Heart left ventricle (tissue), 16 donors: ENCODE measurements at regions of chr7 and their contacts with region 1.

Region 1: DNA sequence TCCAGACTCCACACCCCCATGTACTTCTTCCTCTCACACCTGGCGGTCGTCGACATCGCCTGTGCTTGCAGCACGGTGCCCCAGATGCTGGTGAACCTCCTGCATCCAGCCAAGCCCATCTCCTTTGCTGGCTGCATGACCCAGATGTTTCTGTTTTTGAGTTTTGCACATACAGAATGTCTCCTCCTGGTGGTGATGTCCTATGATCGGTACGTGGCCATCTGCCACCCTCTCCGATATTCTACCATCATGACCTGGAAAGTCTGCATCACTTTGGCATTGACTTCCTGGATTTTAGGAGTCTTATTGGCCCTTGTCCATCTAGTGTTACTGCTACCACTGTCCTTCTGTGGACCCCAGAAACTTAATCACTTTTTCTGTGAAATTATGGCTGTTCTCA is 4.8 kb downstream of the OR2A25 start:
- DNase-seq: no peak
- ATAC-seq: no peak
- H3K4me3 ChIP-seq: no peak overlapping the region
- H3K27ac ChIP-seq: no peak overlapping the region
- H3K4me1 ChIP-seq: no peaks in the 10 kb centered on the region
- H3K27me3 ChIP-seq: no peaks in the 10 kb centered on the region
- CTCF ChIP-seq: no peak
- POLR2A ChIP-seq: no peak

Region 2: GRCh38 chr7:143929224-143929920 is 145.0 kb before region 1 on chr7:
- intact Hi-C with region 1: no loop called
- DNase-seq: no peak
- ATAC-seq: peak in 2 of 4 donors; percentile 76 to 77
- H3K4me3 ChIP-seq: no peak overlapping the region
- H3K27ac ChIP-seq: no peak overlapping the region
- H3K4me1 ChIP-seq: no peaks in the 10 kb centered on the region
- H3K27me3 ChIP-seq: no peaks in the 10 kb centered on the region
- CTCF ChIP-seq: no peak
- POLR2A ChIP-seq: no peak

Region 3: GRCh38 chr7:144057972-144058371 is 16.4 kb before region 1 on chr7:
- intact Hi-C with region 1: loop called in 1 of 10 experiments (anchors 1 kb)
- DNase-seq: no peak
- ATAC-seq: no peak
- H3K4me3 ChIP-seq: no peak overlapping the region
- H3K27ac ChIP-seq: no peak overlapping the region
- H3K4me1 ChIP-seq: no peaks in the 10 kb centered on the region
- H3K27me3 ChIP-seq: no peaks in the 10 kb centered on the region
- CTCF ChIP-seq: no peak
- POLR2A ChIP-seq: no peak